Tibial artery (tissue), 4 donors: ENCODE measurements at regions of chr13 and their contacts with region 1.

Region 1: DNA sequence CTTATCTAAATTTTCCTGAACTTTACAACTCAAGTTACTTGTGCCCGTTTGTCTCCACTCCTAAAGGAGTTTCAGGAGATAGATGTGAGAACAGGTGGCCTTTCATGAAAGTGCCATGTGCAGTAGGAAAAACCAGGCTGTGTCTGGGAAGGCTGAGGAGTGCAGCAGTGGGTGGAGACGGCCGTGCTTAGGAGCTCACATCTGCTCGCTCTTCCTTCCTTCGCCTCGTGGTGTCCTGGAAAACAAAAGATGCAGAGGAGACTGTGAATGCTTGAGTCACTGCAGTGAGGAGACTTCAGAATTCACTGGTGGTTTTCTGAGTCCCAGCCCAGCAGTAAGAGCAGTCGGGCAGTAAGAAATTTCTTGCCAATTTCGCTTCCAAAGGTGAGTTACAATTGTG is 138.4 kb upstream of the RNF113B start:
- DNase-seq: no peak
- H3K4me3 ChIP-seq: no peak overlapping the region
- H3K27ac ChIP-seq: no peak overlapping the region
- H3K4me1 ChIP-seq: no peaks in the 10 kb centered on the region
- H3K27me3 ChIP-seq: no peaks in the 10 kb centered on the region
- CTCF ChIP-seq: no peak

Region 2: DNA sequence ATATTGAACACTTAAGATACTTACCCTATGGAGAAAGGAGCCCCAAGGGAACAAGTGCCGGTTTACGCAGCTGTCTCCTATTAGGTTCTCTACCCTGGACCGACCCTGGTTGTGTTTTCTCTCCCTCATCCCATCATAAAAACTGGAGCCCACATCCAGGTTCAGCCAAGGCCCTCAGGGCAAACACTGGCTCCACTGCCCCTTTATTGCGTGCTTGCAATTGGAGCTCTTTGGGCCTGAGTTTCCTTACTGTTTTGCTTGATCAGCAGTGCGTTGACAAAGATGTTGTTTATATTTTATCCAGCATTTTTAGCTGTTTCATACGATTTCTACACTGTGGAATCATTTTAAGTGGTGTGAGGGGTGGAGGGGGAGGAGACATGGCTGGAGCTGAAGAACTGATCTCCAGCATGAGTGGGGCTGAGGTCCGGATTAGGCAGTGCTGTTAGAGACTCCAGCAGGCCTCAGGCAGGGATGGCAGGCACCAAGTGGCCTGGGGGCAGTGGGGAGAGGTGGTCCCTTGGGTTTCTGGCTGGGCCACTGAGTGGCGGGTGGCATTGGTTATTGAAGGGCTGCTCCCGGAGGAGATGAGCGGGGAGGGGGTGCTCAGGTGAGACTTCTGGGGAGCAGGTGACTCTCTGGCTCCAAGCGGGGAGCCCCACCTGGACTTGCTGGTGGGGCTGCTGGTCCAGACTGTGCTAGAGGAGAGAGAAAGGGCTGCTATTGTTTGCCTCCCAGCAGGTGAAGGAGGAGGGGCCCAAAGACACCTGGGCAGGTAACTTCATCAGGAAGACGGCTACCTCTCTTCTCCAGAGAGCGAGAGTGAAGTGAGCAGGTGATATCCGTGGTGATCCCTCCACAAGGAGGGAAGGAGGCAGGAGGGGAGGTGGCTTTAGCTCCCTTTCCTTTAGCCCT is 76.0 kb before region 1 on chr13:
- intact Hi-C with region 1: loop called (anchors 2 kb)
- DNase-seq: no peak
- H3K4me3 ChIP-seq: no peak overlapping the region
- H3K27ac ChIP-seq: no peak overlapping the region
- H3K4me1 ChIP-seq: no peaks in the 10 kb centered on the region
- H3K27me3 ChIP-seq: no peaks in the 10 kb centered on the region
- CTCF ChIP-seq: no peak